HepG2 (cell line): ENCODE measurements at regions of chr6 and their contacts with region 1.

Region 1: GRCh38 chr6:4105980-4106536 is 27.1 kb upstream of the FAM217A start:
- DNase-seq: peak; percentile 50
- ATAC-seq: peak; percentile 64
- H3K4me3 ChIP-seq: peak overlapping the region in 1 of 3 experiments; percentile 14; a peak in 2 of 6 replicates
- H3K27ac ChIP-seq: peak overlapping the region; percentile 58
- H3K4me1 ChIP-seq: peaks cover 96% of the 10 kb centered on the region
- H3K27me3 ChIP-seq: no peaks in the 10 kb centered on the region
- CTCF ChIP-seq: no peak
- EP300 ChIP-seq: 0 out of 4 replicates have a peak, but pooled peaks of 1 of the 2 experiments have one; percentile 13
- POLR2A ChIP-seq: no peak
- RAD21 ChIP-seq: no peak

Region 2: GRCh38 chr6:4066029-4066755 is 39.9 kb before region 1 on chr6:
- CTCF ChIA-PET with region 1: no interaction called
- POLR2A ChIA-PET with region 1: no interaction called
- in situ Hi-C with region 1: no loop called
- intact Hi-C with region 1: loop called (anchors 2 kb)
- DNase-seq: peak; percentile 39
- ATAC-seq: peak; percentile 58
- H3K4me3 ChIP-seq: no peak overlapping the region
- H3K27ac ChIP-seq: no peak overlapping the region
- H3K4me1 ChIP-seq: peaks cover 27% of the 10 kb centered on the region
- H3K27me3 ChIP-seq: no peaks in the 10 kb centered on the region
- CTCF ChIP-seq: no peak
- EP300 ChIP-seq: no peak
- POLR2A ChIP-seq: no peak
- RAD21 ChIP-seq: no peak